Activated T-helper 2 cell treated with anti-CD3 and anti-CD28 coated beads, Interferon-gamma antibody, Interleukin-2, Interleukin-4, amounts not matched to agents 10 μg/mL and 5 μg/mL and 100 μg/mL, durations not matched to agents 14 hours and 24 hours and 36 hours (primary cell): ENCODE measurements at regions of chr18 and their contacts with region 1.

Region 1: GRCh38 chr18:12038639-12039417 is 54.8 kb upstream of the ANKRD62 start:
- DNase-seq: peak; percentile 68
- H3K4me3 Mint-ChIP-seq: peak overlapping the region; percentile 69
- H3K27ac Mint-ChIP-seq: no peak overlapping the region
- H3K4me1 Mint-ChIP-seq: peaks cover 27% of the 10 kb centered on the region
- H3K27me3 Mint-ChIP-seq: peaks cover 4% of the 10 kb centered on the region

Region 2: GRCh38 chr18:11937874-11938478 is 100.9 kb before region 1 on chr18:
- intact Hi-C with region 1: loop called (anchors 1 kb)
- DNase-seq: peak; percentile 53
- H3K4me3 Mint-ChIP-seq: no peak overlapping the region
- H3K27ac Mint-ChIP-seq: no peak overlapping the region
- H3K4me1 Mint-ChIP-seq: no peaks in the 10 kb centered on the region
- H3K27me3 Mint-ChIP-seq: no peaks in the 10 kb centered on the region

Region 3: DNA sequence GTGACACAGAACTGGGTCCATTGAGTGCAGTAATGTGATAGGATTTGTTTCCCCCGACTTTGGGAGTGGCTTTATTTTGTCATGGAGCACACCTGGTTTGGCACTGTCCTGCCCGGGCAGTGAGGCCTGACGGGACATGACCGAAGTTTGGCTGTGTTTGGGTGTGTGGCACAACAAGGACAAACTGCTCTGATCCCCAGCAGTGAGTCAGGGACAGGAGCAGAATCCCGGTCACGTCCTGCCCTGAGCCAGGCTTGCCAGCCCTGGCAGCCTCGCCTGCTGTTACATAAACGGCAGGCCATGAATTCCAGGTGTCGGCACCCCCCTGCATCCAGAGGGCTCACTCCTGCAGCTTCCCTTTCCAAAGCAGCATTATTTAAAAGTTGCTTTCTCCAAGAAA is 11.8 kb before region 1 on chr18:
- intact Hi-C with region 1: no loop called
- DNase-seq: no peak
- H3K4me3 Mint-ChIP-seq: no peak overlapping the region
- H3K27ac Mint-ChIP-seq: no peak overlapping the region
- H3K4me1 Mint-ChIP-seq: no peaks in the 10 kb centered on the region
- H3K27me3 Mint-ChIP-seq: no peaks in the 10 kb centered on the region

Region 4: DNA sequence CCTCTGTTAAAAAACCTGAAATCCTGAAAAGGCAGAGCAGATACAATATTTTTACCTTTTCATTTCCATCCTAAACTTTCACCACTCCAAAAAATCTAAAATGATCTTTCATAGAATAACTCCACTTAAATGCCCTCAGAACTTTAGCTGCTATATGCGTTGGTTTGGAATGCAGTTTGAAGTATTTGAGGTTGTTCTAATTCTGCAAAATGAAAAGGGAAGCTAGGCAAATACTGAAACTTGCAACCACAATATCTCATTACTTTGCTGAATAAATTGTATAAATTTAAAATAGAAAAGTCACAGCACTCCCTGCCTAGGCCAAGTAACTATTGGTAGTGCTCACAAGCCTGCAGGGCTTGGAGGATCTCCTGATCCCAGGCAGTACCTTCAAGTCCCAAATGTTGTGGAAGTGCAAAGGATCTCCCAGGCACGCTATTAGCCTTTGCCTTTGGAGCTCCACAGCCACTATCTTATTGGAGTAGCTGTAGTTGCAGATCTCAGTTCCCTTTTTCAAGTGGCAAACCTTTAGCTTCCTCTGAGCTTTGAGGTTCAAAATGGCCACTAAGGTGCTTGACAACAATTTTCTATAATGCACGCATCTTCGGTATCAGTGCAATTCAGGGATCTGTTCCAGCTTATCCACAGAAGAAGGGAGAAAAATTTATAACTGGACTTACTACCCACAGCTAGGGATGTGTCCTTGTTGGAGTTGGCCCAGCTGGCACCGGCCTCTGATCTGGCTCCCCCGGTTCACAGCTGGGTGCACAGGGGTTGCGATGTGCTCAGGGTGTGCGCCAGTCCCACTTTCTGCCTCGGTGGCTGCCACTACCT is 11.4 kb after region 1 on chr18:
- intact Hi-C with region 1: no loop called
- DNase-seq: no peak
- H3K4me3 Mint-ChIP-seq: no peak overlapping the region
- H3K27ac Mint-ChIP-seq: no peak overlapping the region
- H3K4me1 Mint-ChIP-seq: peaks cover 16% of the 10 kb centered on the region
- H3K27me3 Mint-ChIP-seq: peaks cover 23% of the 10 kb centered on the region

Region 5: GRCh38 chr18:12552884-12553242 is 514.0 kb after region 1 on chr18:
- intact Hi-C with region 1: no loop called
- DNase-seq: no peak
- H3K4me3 Mint-ChIP-seq: no peak overlapping the region
- H3K27ac Mint-ChIP-seq: no peak overlapping the region
- H3K4me1 Mint-ChIP-seq: peaks cover 3% of the 10 kb centered on the region
- H3K27me3 Mint-ChIP-seq: peaks cover 15% of the 10 kb centered on the region